Activated T-helper 2 cell treated with anti-CD3 and anti-CD28 coated beads, Interferon-gamma antibody, Interleukin-2, Interleukin-4, amounts not matched to agents 10 μg/mL and 5 μg/mL and 100 μg/mL, durations not matched to agents 14 hours and 24 hours and 36 hours (primary cell): ENCODE measurements at regions of chrX and their contacts with region 1.

Region 1: GRCh38 chrX:39859991-39860861 is 237.5 kb downstream of the BCOR start:
- DNase-seq: peak; percentile 81
- H3K4me3 Mint-ChIP-seq: peak overlapping the region; percentile 45
- H3K27ac Mint-ChIP-seq: peak overlapping the region; percentile 99
- H3K4me1 Mint-ChIP-seq: peaks cover 43% of the 10 kb centered on the region
- H3K27me3 Mint-ChIP-seq: no peaks in the 10 kb centered on the region

Region 2: GRCh38 chrX:38811515-38812243 is 1048.5 kb before region 1 on chrX:
- intact Hi-C with region 1: loop called (anchors 5 kb)
- DNase-seq: no peak
- H3K4me3 Mint-ChIP-seq: peak overlapping the region; percentile 20
- H3K27ac Mint-ChIP-seq: peak overlapping the region; percentile 93
- H3K4me1 Mint-ChIP-seq: peaks cover 36% of the 10 kb centered on the region
- H3K27me3 Mint-ChIP-seq: no peaks in the 10 kb centered on the region

Region 3: GRCh38 chrX:39730662-39731397 is 129.4 kb before region 1 on chrX:
- intact Hi-C with region 1: loop called (anchors 5 kb)
- DNase-seq: peak; percentile 25
- H3K4me3 Mint-ChIP-seq: no peak overlapping the region
- H3K27ac Mint-ChIP-seq: peak overlapping the region; percentile 77
- H3K4me1 Mint-ChIP-seq: peaks cover 13% of the 10 kb centered on the region
- H3K27me3 Mint-ChIP-seq: no peaks in the 10 kb centered on the region

Region 4: DNA sequence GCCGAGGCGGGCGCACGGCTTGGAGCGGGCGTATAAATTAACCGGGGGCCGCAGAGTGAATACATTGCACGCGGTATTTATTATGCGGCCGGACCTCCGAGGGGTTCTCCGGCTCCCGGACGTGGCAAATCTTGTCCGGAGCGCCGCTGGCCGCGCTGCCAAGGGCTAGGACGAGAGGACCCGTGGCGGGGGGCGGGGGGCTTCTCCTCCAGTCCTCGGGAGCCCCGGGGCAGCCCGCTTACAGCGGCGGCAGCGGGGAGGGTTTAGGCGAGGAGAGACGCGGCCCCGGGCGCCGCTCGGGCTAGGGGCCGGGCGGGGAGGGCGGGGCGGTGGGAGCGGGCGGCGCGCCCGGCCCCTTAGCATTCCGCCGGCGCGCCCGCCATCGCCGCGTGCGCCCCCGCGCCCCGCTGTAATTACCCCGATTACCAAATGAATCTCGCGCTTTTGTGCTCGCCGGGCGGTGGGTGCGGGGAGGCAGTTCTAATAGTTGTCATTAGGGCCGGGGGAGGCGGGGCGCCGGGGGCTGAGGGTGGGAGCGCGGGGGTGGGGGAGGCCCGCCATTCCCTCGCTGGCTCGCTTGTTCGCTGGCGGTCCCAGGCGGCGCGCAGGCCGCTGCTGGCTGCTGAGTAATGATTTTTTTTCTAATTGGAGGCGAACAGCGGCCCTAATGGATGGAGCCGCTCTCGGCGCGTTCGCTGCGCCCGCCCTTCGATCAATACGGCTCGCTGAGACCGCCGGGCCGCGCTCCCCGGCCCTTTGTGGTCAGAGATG is 39.1 kb before region 1 on chrX:
- intact Hi-C with region 1: loop called (anchors 1 kb)
- DNase-seq: no peak
- H3K4me3 Mint-ChIP-seq: peak overlapping the region; percentile 55
- H3K27ac Mint-ChIP-seq: no peak overlapping the region
- H3K4me1 Mint-ChIP-seq: peaks cover 20% of the 10 kb centered on the region
- H3K27me3 Mint-ChIP-seq: peaks cover 2% of the 10 kb centered on the region

Region 5: GRCh38 chrX:39832211-39832610 is 28.0 kb before region 1 on chrX:
- intact Hi-C with region 1: no loop called
- DNase-seq: no peak
- H3K4me3 Mint-ChIP-seq: no peak overlapping the region
- H3K27ac Mint-ChIP-seq: no peak overlapping the region
- H3K4me1 Mint-ChIP-seq: peaks cover 1% of the 10 kb centered on the region
- H3K27me3 Mint-ChIP-seq: no peaks in the 10 kb centered on the region

Region 6: GRCh38 chrX:39900801-39901170 is 40.6 kb after region 1 on chrX:
- intact Hi-C with region 1: loop called (anchors 5 kb)
- DNase-seq: no peak
- H3K4me3 Mint-ChIP-seq: no peak overlapping the region
- H3K27ac Mint-ChIP-seq: no peak overlapping the region
- H3K4me1 Mint-ChIP-seq: peaks cover 7% of the 10 kb centered on the region
- H3K27me3 Mint-ChIP-seq: peaks cover 2% of the 10 kb centered on the region

Region 7: GRCh38 chrX:39911278-39911897 is 51.2 kb after region 1 on chrX:
- intact Hi-C with region 1: no loop called
- DNase-seq: no peak
- H3K4me3 Mint-ChIP-seq: no peak overlapping the region
- H3K27ac Mint-ChIP-seq: no peak overlapping the region
- H3K4me1 Mint-ChIP-seq: peaks cover 4% of the 10 kb centered on the region
- H3K27me3 Mint-ChIP-seq: no peaks in the 10 kb centered on the region

Region 8: DNA sequence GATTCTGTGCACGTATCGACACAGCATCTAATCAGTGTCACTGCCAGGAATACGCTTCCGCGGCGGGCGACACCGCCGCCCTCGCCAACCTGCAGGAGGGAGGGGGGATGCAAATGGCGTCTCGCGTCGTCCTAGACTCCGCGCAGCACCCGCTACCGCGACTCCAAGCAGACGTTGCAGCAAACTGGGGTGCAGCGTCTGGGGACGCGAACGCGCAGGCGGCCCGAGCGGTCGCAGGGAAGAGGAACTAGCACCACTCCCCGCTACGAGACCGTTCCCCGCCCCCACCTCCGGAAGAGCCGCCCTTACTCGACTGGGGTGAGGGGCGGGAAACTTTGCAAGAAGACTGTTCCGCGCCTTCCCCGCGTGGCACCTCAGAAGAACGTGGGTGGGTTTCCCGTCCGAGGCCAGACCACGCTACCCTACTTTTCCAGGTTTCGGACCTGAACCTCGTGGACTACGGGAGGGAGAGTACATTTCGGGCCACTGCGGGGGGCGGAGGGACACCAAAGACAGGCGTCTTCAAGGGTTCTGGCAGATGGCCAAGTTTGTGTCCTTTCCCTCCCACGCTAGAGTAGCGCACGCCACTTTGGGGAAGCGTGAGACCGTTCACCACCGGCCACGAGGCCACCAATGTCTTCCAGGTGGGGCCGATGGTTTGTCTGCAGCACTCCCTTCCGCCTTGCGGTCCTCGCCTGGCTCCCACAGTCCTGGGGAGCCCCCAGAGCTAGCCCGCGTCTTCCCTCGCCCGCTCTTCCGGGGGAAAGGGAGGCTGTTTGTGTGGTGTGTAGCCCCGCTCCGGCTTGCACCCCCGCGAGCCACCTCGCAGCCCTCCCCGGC is 315.5 kb after region 1 on chrX:
- intact Hi-C with region 1: loop called (anchors 2 kb)
- DNase-seq: peak; percentile 73
- H3K4me3 Mint-ChIP-seq: peak overlapping the region; percentile 86
- H3K27ac Mint-ChIP-seq: peak overlapping the region; percentile 96
- H3K4me1 Mint-ChIP-seq: peaks cover 27% of the 10 kb centered on the region
- H3K27me3 Mint-ChIP-seq: no peaks in the 10 kb centered on the region